HEK293 (cell line): ENCODE measurements at regions of chrX and their contacts with region 1.

Region 1: GRCh38 chrX:11381464-11381863 is 88.3 kb downstream of the AMELX start:
- H3K4me3 ChIP-seq: no peak overlapping the region
- H3K27ac ChIP-seq: no peak overlapping the region
- H3K4me1 ChIP-seq: no peaks in the 10 kb centered on the region
- CTCF ChIP-seq: no peak

Region 2: DNA sequence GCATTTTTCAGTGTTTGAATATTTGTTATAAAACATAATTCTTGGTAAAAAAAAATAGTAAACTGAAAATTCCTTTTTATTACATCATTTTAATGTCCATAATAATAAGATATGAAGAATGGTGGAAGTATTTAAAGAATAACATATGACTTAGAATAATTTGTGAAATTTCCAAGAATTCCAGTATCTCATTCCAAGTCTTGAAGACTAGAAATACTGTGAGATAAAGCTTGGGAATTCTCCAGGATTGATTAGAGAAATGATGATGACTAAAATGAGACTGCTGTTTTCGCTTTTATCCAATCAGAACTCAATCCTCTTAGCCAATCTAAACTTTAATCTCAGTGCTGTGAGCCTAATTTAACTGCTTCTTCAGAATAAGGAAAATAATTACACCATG is 454.6 kb before region 1 on chrX:
- CTCF ChIA-PET with region 1: no interaction called
- POLR2A ChIA-PET with region 1: no interaction called
- H3K4me3 ChIP-seq: no peak overlapping the region
- H3K27ac ChIP-seq: no peak overlapping the region
- H3K4me1 ChIP-seq: no peaks in the 10 kb centered on the region
- CTCF ChIP-seq: no peak

Region 3: GRCh38 chrX:11371106-11371505 is 10.4 kb before region 1 on chrX:
- CTCF ChIA-PET with region 1: interaction called, 19 read pairs
- POLR2A ChIA-PET with region 1: no interaction called
- H3K4me3 ChIP-seq: no peak overlapping the region
- H3K27ac ChIP-seq: no peak overlapping the region
- H3K4me1 ChIP-seq: no peaks in the 10 kb centered on the region
- CTCF ChIP-seq: no peak

Region 4: GRCh38 chrX:11445540-11445939 is 64.1 kb after region 1 on chrX:
- CTCF ChIA-PET with region 1: no interaction called
- POLR2A ChIA-PET with region 1: no interaction called
- H3K4me3 ChIP-seq: no peak overlapping the region
- H3K27ac ChIP-seq: no peak overlapping the region
- H3K4me1 ChIP-seq: no peaks in the 10 kb centered on the region
- CTCF ChIP-seq: no peak

Region 5: GRCh38 chrX:11531226-11531625 is 149.8 kb after region 1 on chrX:
- CTCF ChIA-PET with region 1: interaction called, 10 read pairs
- POLR2A ChIA-PET with region 1: no interaction called
- H3K4me3 ChIP-seq: no peak overlapping the region
- H3K27ac ChIP-seq: no peak overlapping the region
- H3K4me1 ChIP-seq: no peaks in the 10 kb centered on the region
- CTCF ChIP-seq: no peak